AG04450 (cell line): ENCODE measurements at regions of chr1 and their contacts with region 1.

Region 1: DNA sequence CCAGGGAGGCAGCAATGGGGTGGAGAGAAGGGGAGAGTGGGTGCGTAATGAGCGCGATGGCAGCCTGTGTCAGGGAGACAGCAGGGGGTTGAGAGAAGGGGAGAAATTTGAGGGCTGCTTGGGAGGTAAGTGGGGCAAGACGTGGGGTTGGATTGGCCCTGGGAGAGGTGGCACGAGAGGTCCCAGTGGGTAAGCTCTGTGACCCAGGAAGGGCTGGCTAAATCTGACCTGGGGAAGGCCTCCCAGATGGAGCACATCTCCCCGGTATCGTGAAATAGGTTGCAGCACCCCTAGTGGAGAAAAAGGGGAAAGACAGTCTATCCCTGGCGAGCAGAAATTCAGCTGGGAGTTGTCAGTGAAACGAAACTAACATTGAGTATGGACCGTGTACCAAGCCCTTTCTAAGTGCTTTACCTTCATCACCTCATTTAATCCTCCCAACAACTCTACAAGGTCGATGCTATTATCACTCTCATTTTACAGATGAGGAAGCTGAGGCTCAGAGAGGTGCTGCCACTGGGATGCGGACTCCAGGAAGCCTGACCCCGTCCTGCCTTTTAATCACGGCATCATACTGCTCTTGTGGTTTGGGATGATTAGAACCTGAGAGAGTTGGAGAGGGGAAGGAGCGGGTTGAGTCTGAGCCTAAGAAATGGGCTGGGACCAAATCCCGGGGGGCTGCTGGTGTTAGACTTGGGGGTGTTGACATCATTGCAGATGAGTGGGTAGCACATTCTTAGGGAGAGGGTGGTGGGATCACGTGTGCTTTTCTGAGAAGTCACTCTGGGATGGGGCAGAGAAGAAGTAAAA is 56.6 kb upstream of the RPL11 start:
- DNase-seq: peak; percentile 44
- H3K4me3 ChIP-seq: peak overlapping the region; percentile 64
- H3K27ac ChIP-seq: peak overlapping the region; percentile 73
- H3K27me3 ChIP-seq: peaks cover 6% of the 10 kb centered on the region
- CTCF ChIP-seq: peak; percentile 93

Region 2: DNA sequence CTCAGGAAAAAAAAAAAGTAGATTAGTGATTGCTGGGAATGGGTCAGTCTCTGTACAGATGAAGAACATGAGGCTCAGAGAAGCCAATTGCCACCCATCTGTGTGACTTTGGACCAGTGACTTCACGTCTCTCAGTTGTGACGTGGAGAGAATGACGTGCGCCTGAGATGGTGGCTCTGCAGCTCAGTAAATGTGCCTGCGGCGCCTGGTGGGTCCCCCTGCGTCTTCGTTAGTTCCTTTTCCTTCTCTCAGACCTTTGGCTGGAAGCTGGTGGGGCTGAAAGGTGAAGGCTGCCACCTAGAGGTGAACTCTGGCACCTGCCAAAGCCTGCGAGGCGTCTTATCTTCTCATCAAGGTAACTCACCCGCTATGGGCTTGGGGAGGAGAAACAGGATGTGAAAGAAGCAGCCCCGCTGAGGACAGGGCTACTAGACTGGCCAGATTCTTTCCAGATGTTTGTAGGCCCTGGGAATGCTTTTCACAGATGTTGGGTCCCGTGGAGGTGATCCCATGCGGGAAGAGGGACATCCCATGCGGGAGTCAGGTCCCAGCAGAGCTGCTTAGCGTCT is 95.3 kb before region 1 on chr1:
- CTCF ChIA-PET with region 1: interaction called, 482 read pairs
- POLR2A ChIA-PET with region 1: interaction called, 7 read pairs
- DNase-seq: peak; percentile 70
- H3K4me3 ChIP-seq: no peak overlapping the region
- H3K27ac ChIP-seq: no peak overlapping the region
- H3K27me3 ChIP-seq: no peaks in the 10 kb centered on the region
- CTCF ChIP-seq: peak; percentile 96

Region 3: GRCh38 chr1:23577056-23578004 is 57.7 kb before region 1 on chr1:
- CTCF ChIA-PET with region 1: interaction called, 24 read pairs
- POLR2A ChIA-PET with region 1: interaction called, 9 read pairs
- DNase-seq: peak; percentile 67
- H3K4me3 ChIP-seq: peak overlapping the region; percentile 23; the same call in 1 of the 2 replicates
- H3K27ac ChIP-seq: peak overlapping the region; percentile 93
- H3K27me3 ChIP-seq: no peaks in the 10 kb centered on the region
- CTCF ChIP-seq: no peak

Region 4: DNA sequence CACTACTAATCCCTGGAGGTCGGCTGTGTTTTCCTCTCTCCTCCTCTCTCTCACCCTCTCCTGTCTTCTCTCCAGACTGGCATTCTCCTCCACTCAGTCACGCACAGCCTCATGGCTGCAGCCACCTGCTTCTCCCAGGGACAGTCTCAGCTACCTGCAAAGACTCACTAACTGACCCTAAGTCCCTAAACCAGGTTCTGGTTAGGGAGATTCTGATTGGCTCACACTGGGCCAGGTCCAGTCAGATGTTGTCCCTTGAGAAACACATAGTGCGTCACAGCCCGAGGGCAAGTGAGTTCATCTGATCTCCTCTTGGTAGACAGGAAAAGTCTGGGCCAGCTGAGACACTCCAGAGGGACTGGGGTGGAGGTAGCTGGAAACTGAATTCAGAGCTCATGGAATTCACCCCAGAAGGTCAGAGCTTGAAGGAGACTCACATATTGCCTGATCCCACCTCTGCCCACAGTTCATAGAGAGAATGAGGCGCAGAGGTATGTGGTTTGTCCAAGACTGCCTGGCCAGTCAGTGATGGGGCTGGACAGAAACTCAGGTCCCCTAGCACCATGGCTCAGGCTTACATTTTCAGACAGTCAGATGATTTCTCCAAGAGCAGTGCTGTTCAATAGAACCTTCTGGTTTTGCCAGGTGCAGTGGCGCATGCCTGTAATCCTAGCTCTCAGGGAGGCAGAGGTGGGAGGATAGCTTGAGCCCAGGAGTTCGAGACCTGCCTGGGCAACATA is 16.2 kb after region 1 on chr1:
- CTCF ChIA-PET with region 1: interaction called, 13 read pairs
- POLR2A ChIA-PET with region 1: interaction called, 5 read pairs
- DNase-seq: no peak
- H3K4me3 ChIP-seq: no peak overlapping the region
- H3K27ac ChIP-seq: no peak overlapping the region
- H3K27me3 ChIP-seq: peaks cover 7% of the 10 kb centered on the region
- CTCF ChIP-seq: no peak

Region 5: DNA sequence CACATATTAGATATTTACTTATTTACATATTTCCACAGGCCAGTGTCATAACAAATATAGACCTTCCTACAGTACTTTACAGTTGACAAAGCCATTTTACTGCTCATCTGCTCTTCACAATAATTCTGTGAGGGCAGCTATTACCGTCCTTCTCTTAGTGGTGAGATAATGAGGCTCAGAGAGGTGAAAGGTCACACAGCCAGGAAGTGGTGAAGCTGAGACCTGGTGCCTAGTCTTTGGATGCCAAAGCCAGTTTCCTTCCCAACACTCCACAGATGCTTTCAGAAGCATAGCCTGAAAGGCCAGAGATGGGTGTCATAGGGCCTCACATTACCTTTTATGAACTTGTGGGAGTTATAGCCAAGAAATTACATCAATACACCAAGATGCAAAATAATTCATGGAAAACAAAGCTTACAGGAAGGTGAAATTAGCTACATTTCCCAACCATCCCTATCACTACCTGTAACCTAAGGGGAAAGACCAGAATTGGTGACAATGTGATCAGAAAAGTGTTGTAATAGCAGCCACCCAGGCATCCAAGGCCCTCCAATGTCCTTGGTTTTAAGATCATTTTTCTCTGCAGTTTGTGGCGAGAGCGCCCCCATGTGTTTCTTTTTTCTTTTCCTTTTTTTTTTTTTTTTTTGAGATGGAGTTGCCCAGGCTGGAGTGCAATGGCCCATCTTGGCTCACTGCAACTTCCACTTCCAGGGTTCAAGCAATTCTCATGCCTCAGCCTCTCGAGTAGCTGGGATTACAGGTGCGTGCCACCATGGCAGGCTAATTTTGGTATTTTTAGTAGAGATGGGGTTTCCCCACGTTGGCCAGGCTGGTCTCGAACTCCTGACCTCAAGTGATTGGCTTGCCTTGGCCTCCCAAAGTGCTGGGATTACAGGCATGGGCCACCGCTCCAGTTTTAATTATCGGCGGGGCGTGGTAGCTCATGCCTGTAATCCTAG is 30.1 kb after region 1 on chr1:
- CTCF ChIA-PET with region 1: interaction called, 10 read pairs
- POLR2A ChIA-PET with region 1: interaction called, 10 read pairs
- DNase-seq: no peak
- H3K4me3 ChIP-seq: no peak overlapping the region
- H3K27ac ChIP-seq: no peak overlapping the region
- H3K27me3 ChIP-seq: peaks cover 4% of the 10 kb centered on the region
- CTCF ChIP-seq: peak; percentile 45

Region 6: GRCh38 chr1:23867953-23868556 is 233.0 kb after region 1 on chr1 and contains the start of gene FUCA1:
- CTCF ChIA-PET with region 1: no interaction called
- POLR2A ChIA-PET with region 1: no interaction called
- DNase-seq: peak; percentile 29
- H3K4me3 ChIP-seq: peak within 1 kb of the TSS; percentile 65
- H3K27ac ChIP-seq: no peak within 1 kb of the TSS
- H3K27me3 ChIP-seq: peaks cover 34% of the 10 kb centered on the region
- CTCF ChIP-seq: peak; percentile 96
- polyA plus RNA-seq, gene FUCA1: 2.9 and 3.9 TPM in 2 replicates